Left ventricle myocardium inferior (tissue), 1 donor: ENCODE measurements at regions of chr6 and their contacts with region 1.

Region 1: GRCh38 chr6:4125936-4126864 is 9.2 kb downstream of the ECI2 start:
- DNase-seq: no peak
- H3K4me3 ChIP-seq: no peak overlapping the region
- H3K27ac ChIP-seq: no peak overlapping the region
- H3K4me1 ChIP-seq: peaks cover 8% of the 10 kb centered on the region
- H3K27me3 ChIP-seq: no peaks in the 10 kb centered on the region
- CTCF ChIP-seq: peak; percentile 34

Region 2: DNA sequence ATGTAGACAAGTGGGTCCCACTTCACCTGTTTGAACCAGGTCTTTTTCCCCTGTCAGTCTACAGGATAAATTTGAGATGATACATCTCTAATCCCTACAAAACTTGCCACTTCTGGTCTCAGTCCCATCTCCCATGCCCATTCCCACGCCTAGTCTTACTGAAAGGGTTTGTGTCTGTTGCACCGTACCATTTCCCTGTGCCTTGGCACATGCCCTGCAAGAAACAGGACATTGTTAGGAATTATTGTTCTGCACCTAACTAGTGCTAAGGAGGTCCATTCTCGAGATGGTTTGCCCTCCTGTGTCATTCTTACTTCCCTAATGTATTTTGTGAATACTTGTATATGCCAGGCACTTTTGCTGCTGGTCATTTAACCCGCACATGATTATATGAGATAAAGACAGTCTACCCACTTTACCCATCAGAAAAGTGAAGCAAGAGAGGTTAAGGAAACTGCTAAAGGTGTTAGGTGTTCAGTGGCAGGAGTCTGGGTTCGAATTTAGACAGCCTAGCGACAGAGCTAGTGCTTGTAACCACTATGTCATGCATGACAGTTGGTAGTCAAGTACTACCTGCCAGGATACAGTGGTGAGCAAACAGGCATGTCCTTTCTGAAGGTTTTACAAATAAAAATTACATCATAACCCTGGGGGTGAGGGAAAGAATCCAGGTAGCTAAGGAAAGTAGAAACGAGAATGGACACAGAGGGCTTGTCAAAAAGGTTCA is 60.0 kb before region 1 on chr6:
- intact Hi-C with region 1: loop called (anchors 10 kb)
- DNase-seq: no peak
- H3K4me3 ChIP-seq: no peak overlapping the region
- H3K27ac ChIP-seq: no peak overlapping the region
- H3K4me1 ChIP-seq: no peaks in the 10 kb centered on the region
- H3K27me3 ChIP-seq: no peaks in the 10 kb centered on the region
- CTCF ChIP-seq: no peak